Activated T-helper 1 cell treated with anti-CD3 and anti-CD28 coated beads, Interleukin-12 subunit alpha, Interleukin-12 subunit beta, Interleukin-2, Interleukin-4 antibody, amounts not matched to agents 30 ng/mL and 10 ng/mL and 1 ng/mL, durations not matched to agents 14 hours and 24 hours and 36 hours (primary cell): ENCODE measurements at regions of chr2 and their contacts with region 1.

Region 1: GRCh38 chr2:148603562-148603920 is 41.0 kb upstream of the EPC2 start:
- DNase-seq: peak; percentile 40
- H3K4me3 Mint-ChIP-seq: no peak overlapping the region
- H3K27ac Mint-ChIP-seq: peak overlapping the region; percentile 96
- H3K4me1 Mint-ChIP-seq: peaks cover 29% of the 10 kb centered on the region
- H3K27me3 Mint-ChIP-seq: peaks cover 13% of the 10 kb centered on the region

Region 2: GRCh38 chr2:147297820-147298219 is 1305.7 kb before region 1 on chr2:
- intact Hi-C with region 1: loop called (anchors 2 kb)
- DNase-seq: peak; percentile 49
- H3K4me3 Mint-ChIP-seq: peak overlapping the region; percentile 36
- H3K27ac Mint-ChIP-seq: peak overlapping the region; percentile 89
- H3K4me1 Mint-ChIP-seq: peaks cover 72% of the 10 kb centered on the region
- H3K27me3 Mint-ChIP-seq: no peaks in the 10 kb centered on the region

Region 3: GRCh38 chr2:148020111-148021058 is 583.2 kb before region 1 on chr2 and contains the start of gene ORC4:
- intact Hi-C with region 1: loop called (anchors 1 kb)
- DNase-seq: peak; percentile 95
- H3K4me3 Mint-ChIP-seq: peak within 1 kb of the TSS; percentile 98
- H3K27ac Mint-ChIP-seq: peak within 1 kb of the TSS; percentile 95
- H3K4me1 Mint-ChIP-seq: peaks cover 40% of the 10 kb centered on the region
- H3K27me3 Mint-ChIP-seq: no peaks in the 10 kb centered on the region
- total RNA-seq, gene ORC4: 29.2 and 34.2 TPM in 2 replicates

Region 4: GRCh38 chr2:148552675-148553331 is 50.7 kb before region 1 on chr2:
- intact Hi-C with region 1: loop called (anchors 1 kb)
- DNase-seq: peak; percentile 32
- H3K4me3 Mint-ChIP-seq: no peak overlapping the region
- H3K27ac Mint-ChIP-seq: no peak overlapping the region
- H3K4me1 Mint-ChIP-seq: peaks cover 6% of the 10 kb centered on the region
- H3K27me3 Mint-ChIP-seq: no peaks in the 10 kb centered on the region

Region 5: GRCh38 chr2:148614322-148615049 is 10.9 kb after region 1 on chr2:
- intact Hi-C with region 1: loop called (anchors 1 kb)
- DNase-seq: no peak
- H3K4me3 Mint-ChIP-seq: peak overlapping the region; percentile 41
- H3K27ac Mint-ChIP-seq: peak overlapping the region; percentile 47
- H3K4me1 Mint-ChIP-seq: peaks cover 16% of the 10 kb centered on the region
- H3K27me3 Mint-ChIP-seq: peaks cover 4% of the 10 kb centered on the region

Region 6: DNA sequence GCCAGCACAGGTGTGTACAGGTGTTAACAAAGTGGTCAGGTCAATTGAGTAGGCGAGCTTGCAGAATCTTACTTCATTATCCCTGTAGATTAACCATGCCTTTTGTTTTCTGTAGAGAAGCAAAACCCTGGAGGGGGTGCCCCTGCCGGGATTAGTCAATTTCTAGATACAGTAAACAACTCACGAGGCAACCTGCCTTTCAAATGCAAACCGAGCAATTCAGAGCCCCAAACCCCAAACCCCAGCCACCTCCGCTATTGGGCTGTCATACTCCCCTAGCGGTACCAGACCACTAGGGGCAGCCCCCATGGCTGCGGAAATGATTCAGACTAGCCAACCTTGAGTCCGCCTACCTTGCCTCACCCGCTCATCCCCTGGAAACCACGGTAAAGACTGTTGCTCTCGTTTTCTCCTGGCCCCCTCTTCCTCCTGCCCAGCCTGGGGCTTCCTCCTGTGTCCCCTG is 210.1 kb after region 1 on chr2:
- intact Hi-C with region 1: loop called (anchors 1 kb)
- DNase-seq: peak; percentile 43
- H3K4me3 Mint-ChIP-seq: no peak overlapping the region
- H3K27ac Mint-ChIP-seq: no peak overlapping the region
- H3K4me1 Mint-ChIP-seq: peaks cover 11% of the 10 kb centered on the region
- H3K27me3 Mint-ChIP-seq: peaks cover 13% of the 10 kb centered on the region

Region 7: DNA sequence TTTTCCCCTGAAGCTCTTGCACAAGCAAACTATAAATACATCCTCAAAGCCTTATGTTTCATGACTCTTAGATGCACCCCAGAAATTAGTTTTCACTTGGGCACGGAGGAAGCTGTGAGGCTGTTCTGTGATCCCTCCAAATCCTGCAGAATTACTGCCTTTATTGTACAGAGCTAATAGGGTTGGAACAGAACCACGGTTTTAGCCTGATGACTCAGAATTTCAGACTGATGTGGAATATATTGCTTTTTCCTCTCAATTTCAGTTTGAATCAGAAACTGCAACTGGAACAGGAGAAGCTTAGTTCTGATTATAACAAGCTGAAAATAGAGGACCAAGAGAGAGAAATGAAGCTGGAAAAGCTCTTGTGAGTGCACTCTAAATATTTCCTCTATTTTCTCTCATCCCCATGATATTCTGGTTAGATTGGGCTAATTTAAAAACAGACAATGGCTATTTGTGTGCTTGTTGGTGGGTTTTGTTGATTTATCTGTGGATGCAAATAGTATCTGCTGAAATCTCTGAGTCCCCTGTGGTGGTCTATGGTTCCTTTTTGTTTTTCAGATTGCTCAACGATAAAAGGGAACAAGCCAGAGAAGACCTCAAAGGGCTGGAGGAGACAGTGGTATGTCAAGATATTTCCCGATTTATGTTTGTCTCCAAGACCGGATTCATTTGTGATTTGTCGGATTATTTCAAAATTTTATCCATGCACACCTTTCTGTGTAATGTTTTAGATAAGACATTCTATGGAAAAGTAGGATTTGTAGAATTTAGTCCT is 396.8 kb after region 1 on chr2:
- intact Hi-C with region 1: loop called (anchors 1 kb)
- DNase-seq: no peak
- H3K4me3 Mint-ChIP-seq: no peak overlapping the region
- H3K27ac Mint-ChIP-seq: peak overlapping the region; percentile 27
- H3K4me1 Mint-ChIP-seq: peaks cover 17% of the 10 kb centered on the region
- H3K27me3 Mint-ChIP-seq: no peaks in the 10 kb centered on the region